ENCODE measurements at regions of chr12 and their contacts with region 1.

Region 1: DNA sequence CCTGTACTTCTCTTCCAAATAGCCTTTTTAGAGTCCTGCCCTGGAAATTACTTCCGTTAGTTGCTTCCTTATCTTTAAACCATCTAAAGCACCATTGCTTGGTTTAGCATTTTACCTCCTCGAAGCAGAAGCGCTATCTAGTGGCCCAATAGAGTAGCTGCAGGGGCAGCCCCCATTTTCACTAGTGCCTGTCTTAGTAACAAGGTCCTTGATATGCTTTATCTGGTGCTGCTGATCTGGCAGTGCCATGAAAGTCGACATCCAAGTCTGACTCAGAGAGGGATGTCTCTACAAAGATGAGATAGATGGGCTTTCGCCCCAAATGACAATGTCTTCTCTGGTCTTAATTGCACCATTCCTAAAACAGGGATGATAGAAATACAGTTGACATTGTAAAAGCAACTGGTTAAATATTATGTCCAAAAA is 25.0 kb upstream of the CIT start:
- DNase-seq: peak; percentile 68
- H3K4me3 Mint-ChIP-seq: no peak overlapping the region
- H3K27ac Mint-ChIP-seq: no peak overlapping the region
- H3K4me1 Mint-ChIP-seq: peaks cover 6% of the 10 kb centered on the region
- H3K27me3 Mint-ChIP-seq: no peaks in the 10 kb centered on the region

Region 2: GRCh38 chr12:119115296-119115905 is 786.7 kb before region 1 on chr12:
- intact Hi-C with region 1: loop called (anchors 10 kb)
- DNase-seq: no peak
- H3K4me3 Mint-ChIP-seq: no peak overlapping the region
- H3K27ac Mint-ChIP-seq: no peak overlapping the region
- H3K4me1 Mint-ChIP-seq: no peaks in the 10 kb centered on the region
- H3K27me3 Mint-ChIP-seq: no peaks in the 10 kb centered on the region

Region 3: GRCh38 chr12:119444456-119445044 is 457.5 kb before region 1 on chr12:
- intact Hi-C with region 1: loop called (anchors 10 kb)
- DNase-seq: peak; percentile 23
- H3K4me3 Mint-ChIP-seq: no peak overlapping the region
- H3K27ac Mint-ChIP-seq: no peak overlapping the region
- H3K4me1 Mint-ChIP-seq: no peaks in the 10 kb centered on the region
- H3K27me3 Mint-ChIP-seq: peaks cover 3% of the 10 kb centered on the region

Region 4: GRCh38 chr12:119667577-119668323 is 234.3 kb before region 1 on chr12 and contains the start of gene PRKAB1:
- intact Hi-C with region 1: loop called (anchors 1 kb)
- DNase-seq: peak; percentile 96
- H3K4me3 Mint-ChIP-seq: peak within 1 kb of the TSS; percentile 95
- H3K27ac Mint-ChIP-seq: peak within 1 kb of the TSS; percentile 82
- H3K4me1 Mint-ChIP-seq: peaks cover 49% of the 10 kb centered on the region
- H3K27me3 Mint-ChIP-seq: no peaks in the 10 kb centered on the region
- total RNA-seq, gene PRKAB1: 30.3 and 33.7 TPM in 2 replicates

Region 5: GRCh38 chr12:119780786-119781434 is 121.2 kb before region 1 on chr12:
- intact Hi-C with region 1: loop called (anchors 5 kb)
- DNase-seq: no peak
- H3K4me3 Mint-ChIP-seq: no peak overlapping the region
- H3K27ac Mint-ChIP-seq: no peak overlapping the region
- H3K4me1 Mint-ChIP-seq: peaks cover 14% of the 10 kb centered on the region
- H3K27me3 Mint-ChIP-seq: no peaks in the 10 kb centered on the region

Region 6: DNA sequence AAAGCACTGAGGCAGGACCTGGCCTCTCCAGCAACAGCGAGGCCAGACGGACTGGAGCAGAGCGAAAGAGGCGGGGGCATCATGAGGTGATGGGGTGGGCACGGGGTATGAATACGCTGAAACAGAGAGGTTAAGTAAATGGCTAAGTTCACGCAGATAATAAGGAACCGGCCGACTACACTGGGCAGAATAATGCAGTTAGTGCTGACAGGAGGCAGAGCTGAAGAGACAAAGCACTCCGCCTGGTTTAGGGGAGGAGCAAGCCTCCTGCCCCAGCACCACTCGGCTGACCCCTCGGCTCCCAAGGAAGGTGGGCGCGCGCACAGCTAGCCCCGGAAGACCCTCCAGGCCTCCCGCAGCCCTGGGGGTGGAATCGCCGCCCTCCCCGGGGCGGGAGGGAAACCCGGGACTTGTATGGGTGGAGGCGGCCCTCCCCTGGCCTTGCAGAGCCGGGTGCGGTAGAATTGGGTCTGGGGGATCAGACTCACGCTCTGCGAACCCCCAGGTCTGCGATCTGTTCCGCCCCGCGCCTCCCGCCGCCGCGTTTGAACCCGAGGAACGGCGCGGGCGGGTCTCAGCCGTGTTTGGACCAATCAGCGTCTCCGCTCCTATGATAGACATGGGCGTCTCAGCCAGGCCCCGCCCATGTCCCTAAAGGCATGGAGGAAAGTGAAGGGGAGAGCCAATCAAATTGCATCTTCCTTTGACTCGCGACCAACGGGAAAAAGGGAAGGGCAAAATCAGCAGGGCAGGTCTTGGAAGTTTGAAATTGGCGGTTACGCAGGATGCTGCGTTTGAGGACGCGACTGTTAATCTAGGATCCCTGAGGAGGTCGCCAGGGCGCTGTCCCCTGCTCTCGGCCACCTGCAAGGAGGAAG is 25.1 kb before region 1 on chr12 and contains the start of gene CIT:
- intact Hi-C with region 1: loop called (anchors 1 kb)
- DNase-seq: peak; percentile 87
- H3K4me3 Mint-ChIP-seq: peak within 1 kb of the TSS; percentile 84
- H3K27ac Mint-ChIP-seq: peak within 1 kb of the TSS; percentile 67
- H3K4me1 Mint-ChIP-seq: peaks cover 25% of the 10 kb centered on the region
- H3K27me3 Mint-ChIP-seq: peaks cover 12% of the 10 kb centered on the region
- total RNA-seq, gene CIT: 36.6 and 40.3 TPM in 2 replicates

Measured in activated T-helper 1 cell treated with anti-CD3 and anti-CD28 coated beads, Interleukin-12 subunit alpha, Interleukin-12 subunit beta, Interleukin-2, Interleukin-4 antibody, amounts not matched to agents 30 ng/mL and 10 ng/mL and 1 ng/mL, durations not matched to agents 14 hours and 24 hours and 36 hours (primary cell).